ENCODE measurements at regions of chr12 and their contacts with region 1.

Region 1: DNA sequence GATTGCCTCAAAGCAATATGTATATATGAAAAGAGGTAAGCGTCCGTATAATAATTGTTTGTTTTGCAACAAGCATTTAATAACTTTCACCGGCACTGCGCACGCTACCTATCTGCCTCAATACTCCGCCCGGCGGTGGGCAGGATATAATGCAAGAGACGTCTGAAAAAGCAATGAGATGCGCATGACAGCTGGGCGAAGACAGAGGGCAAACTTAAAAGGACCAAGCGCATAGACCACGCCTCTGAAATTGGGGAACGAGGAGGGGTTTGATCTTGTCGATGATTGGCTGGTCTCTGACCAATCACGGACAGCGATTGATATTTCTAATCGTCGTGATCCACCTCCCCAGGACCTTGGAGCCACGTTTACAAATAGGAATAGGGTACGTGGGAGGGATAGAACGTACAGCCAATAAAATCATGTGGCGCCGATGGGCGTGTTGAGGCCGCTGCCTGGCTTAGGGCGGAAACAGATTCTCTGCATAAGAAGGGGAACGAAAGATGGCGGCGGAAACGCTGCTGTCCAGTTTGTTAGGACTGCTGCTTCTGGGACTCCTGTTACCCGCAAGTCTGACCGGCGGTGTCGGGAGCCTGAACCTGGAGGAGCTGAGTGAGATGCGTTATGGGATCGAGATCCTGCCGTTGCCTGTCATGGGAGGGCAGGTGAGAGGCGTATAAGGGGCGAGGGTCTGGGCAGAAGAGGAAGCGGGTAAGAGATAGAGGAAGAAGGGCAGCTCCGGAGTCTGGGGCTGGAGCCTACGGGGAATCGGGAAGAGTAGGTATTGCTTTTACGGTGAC is at the start of gene OS9:
- DNase-seq: peak; percentile 95 to 99
- H3K4me3 ChIP-seq: peak within 1 kb of the TSS; percentile 75 to 77
- H3K27ac ChIP-seq: peak within 1 kb of the TSS; percentile 62 to 79
- H3K4me1 ChIP-seq: peaks cover 0 to 7% of the 10 kb centered on the region in 2 donors
- H3K27me3 ChIP-seq: no peaks in the 10 kb centered on the region
- CTCF ChIP-seq: peak; percentile 72 to 81 (median 74)
- total RNA-seq, gene OS9: 233 TPM

Region 2: GRCh38 chr12:57611108-57611809 is 82.6 kb before region 1 on chr12 and contains the start of gene ARHGEF25:
- intact Hi-C with region 1: loop called (anchors 5 kb)
- DNase-seq: peak in 1 of 2 donors; percentile 86
- H3K4me3 ChIP-seq: peak within 1 kb of the TSS; percentile 70 to 88
- H3K27ac ChIP-seq: peak within 1 kb of the TSS; percentile 87 to 97
- H3K4me1 ChIP-seq: peaks cover 6 to 39% of the 10 kb centered on the region in 2 donors
- H3K27me3 ChIP-seq: no peaks in the 10 kb centered on the region
- CTCF ChIP-seq: no peak
- total RNA-seq, gene ARHGEF25: 47.8 TPM

Region 3: DNA sequence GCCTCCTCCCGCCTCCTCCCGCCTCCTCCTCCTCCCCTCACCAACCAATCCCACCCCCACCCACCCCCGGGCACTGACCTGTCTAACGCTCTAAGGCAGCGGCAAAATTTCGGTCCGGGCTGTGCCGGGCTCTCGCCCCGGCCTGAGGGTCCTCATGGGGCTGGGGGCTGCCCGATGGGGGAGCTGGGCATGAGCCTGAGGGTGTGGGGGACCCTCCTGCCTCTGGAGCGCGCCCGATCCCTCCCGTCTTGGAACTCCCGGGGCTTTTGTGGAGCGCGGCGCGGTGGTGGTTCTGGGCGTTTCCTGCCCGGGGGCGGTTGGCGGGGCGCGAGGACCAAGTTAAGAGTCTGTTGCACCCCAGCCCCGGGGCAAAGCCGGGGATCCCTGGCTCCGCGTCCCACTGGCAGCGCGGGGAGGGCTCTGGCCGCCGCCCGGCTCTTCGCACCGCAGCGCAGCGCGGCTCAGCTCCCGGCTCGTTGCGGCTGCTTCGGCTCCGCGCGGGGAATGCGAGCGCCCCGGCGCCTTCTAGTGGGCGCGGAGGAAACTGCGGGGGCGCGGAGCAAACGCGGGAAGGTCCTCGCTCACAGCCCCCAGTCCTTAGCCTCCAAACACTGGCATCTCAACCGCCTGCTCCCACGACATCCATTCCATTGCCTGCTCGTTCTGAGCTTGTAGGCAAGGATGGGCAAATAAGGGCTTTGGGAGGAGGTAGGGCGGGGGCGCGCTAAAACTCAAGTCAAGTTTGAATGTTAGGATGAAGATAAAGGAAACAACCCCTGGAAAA is 61.0 kb before region 1 on chr12 and contains the start of gene B4GALNT1:
- intact Hi-C with region 1: loop called (anchors 2 kb)
- DNase-seq: peak in 1 of 2 donors; percentile 79
- H3K4me3 ChIP-seq: peak within 1 kb of the TSS; percentile 69 to 82
- H3K27ac ChIP-seq: no peak within 1 kb of the TSS
- H3K4me1 ChIP-seq: peaks cover 4 to 7% of the 10 kb centered on the region in 2 donors
- H3K27me3 ChIP-seq: no peaks in the 10 kb centered on the region
- CTCF ChIP-seq: peak; percentile 87 to 96 (median 92)
- total RNA-seq, gene B4GALNT1: 16.6 TPM

Region 4: GRCh38 chr12:57744777-57745484 is 51.1 kb after region 1 on chr12 and contains the start of gene TSPAN31:
- intact Hi-C with region 1: loop called (anchors 1 kb)
- DNase-seq: peak; percentile 93 to 99
- H3K4me3 ChIP-seq: peak within 1 kb of the TSS; percentile 77 to 90
- H3K27ac ChIP-seq: peak within 1 kb of the TSS; percentile 98 to 100
- H3K4me1 ChIP-seq: peaks cover 0 to 7% of the 10 kb centered on the region in 2 donors
- H3K27me3 ChIP-seq: no peaks in the 10 kb centered on the region
- CTCF ChIP-seq: no peak
- total RNA-seq, gene TSPAN31: 42.3 TPM

Region 5: DNA sequence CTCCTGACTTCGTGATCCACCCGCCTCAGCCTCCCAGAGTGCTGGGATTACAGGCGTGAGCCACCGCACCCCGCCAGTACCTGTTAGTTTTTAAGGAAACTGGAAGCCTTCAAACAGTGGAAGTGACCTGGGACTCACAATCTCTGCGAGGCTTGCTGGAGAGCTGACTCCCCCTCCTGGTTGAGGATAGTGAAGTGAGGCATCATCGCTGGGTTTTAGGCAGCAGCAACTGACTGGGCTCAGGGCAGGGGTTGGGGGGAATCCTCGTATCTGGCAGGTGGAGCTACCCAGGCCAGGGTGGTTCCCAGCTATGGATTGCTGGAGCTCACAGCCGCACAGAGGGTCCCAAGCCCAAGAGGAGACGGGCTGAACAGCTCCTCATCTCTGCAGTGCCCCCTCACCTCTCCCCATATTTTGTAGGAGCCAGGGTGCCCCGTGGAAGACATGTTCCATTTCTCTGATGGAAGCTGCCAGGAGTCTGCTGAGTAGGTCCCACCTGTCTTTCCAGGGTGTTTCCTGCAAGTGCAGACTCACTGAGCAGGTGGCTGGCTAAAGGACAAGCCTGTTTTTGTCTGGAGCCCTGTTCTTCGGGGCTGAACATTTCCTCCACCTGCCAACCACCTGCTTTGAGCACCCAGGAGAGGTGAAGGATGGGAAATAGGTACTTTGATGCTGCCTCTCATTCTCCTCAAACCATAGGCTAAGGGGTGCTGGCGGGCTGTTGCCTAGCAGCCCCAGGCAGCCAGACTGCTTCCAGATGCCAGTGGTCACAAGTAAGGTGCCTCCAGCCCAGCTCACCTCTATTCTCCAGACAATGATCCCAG is 121.5 kb after region 1 on chr12:
- intact Hi-C with region 1: no loop called
- DNase-seq: no peak
- H3K4me3 ChIP-seq: no peak overlapping the region
- H3K27ac ChIP-seq: no peak overlapping the region
- H3K4me1 ChIP-seq: peaks cover 0 to 21% of the 10 kb centered on the region in 2 donors
- H3K27me3 ChIP-seq: no peaks in the 10 kb centered on the region
- CTCF ChIP-seq: no peak

Measured in ascending aorta (tissue), 2 donors.